Activated CD8-positive, alpha-beta T cell treated with anti-CD3 and anti-CD28 coated beads for 36 hours (primary cell): ENCODE measurements at regions of chr1 and their contacts with region 1.

Region 1: GRCh38 chr1:21270086-21270689 is 20.1 kb downstream of the ECE1 start:
- DNase-seq: peak; percentile 90
- ATAC-seq: peak; percentile 95
- H3K4me3 Mint-ChIP-seq: no peak overlapping the region
- H3K27ac Mint-ChIP-seq: peak overlapping the region; percentile 63
- H3K4me1 Mint-ChIP-seq: peaks cover 30% of the 10 kb centered on the region
- H3K27me3 Mint-ChIP-seq: no peaks in the 10 kb centered on the region
- CTCF ChIP-seq: peak; percentile 98

Region 2: DNA sequence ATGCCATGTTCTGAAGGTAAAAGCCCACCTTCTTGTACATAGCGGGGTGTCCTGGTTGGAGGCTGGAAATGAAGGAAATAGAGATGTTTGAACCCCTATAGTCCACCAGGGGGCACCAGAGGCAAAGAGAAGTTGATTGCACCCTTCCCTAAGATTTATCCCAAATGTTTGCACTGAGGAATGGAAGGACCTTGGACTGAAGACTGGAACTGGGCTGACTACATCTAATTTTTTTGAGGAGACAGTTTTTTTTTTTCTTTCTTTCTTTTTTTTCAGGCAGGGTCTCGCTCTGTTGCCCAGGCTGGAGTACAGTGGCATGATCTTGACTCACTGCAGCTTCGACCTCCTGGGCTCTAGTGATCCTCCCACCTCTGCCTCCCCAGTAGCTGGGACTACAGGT is 38.1 kb before region 1 on chr1:
- CTCF ChIA-PET with region 1: interaction called, 24 read pairs
- POLR2A ChIA-PET with region 1: no interaction called
- intact Hi-C with region 1: no loop called
- DNase-seq: peak; percentile 38
- ATAC-seq: peak; percentile 64
- H3K4me3 Mint-ChIP-seq: no peak overlapping the region
- H3K27ac Mint-ChIP-seq: no peak overlapping the region
- H3K4me1 Mint-ChIP-seq: no peaks in the 10 kb centered on the region
- H3K27me3 Mint-ChIP-seq: no peaks in the 10 kb centered on the region
- CTCF ChIP-seq: peak; percentile 99

Region 3: GRCh38 chr1:21255278-21255942 is 14.8 kb before region 1 on chr1:
- CTCF ChIA-PET with region 1: interaction called, 177 read pairs
- POLR2A ChIA-PET with region 1: interaction called, 6 read pairs
- intact Hi-C with region 1: no loop called
- DNase-seq: peak; percentile 92
- ATAC-seq: peak; percentile 45
- H3K4me3 Mint-ChIP-seq: no peak overlapping the region
- H3K27ac Mint-ChIP-seq: peak overlapping the region; percentile 87
- H3K4me1 Mint-ChIP-seq: peaks cover 58% of the 10 kb centered on the region
- H3K27me3 Mint-ChIP-seq: no peaks in the 10 kb centered on the region
- CTCF ChIP-seq: peak; percentile 85

Region 4: DNA sequence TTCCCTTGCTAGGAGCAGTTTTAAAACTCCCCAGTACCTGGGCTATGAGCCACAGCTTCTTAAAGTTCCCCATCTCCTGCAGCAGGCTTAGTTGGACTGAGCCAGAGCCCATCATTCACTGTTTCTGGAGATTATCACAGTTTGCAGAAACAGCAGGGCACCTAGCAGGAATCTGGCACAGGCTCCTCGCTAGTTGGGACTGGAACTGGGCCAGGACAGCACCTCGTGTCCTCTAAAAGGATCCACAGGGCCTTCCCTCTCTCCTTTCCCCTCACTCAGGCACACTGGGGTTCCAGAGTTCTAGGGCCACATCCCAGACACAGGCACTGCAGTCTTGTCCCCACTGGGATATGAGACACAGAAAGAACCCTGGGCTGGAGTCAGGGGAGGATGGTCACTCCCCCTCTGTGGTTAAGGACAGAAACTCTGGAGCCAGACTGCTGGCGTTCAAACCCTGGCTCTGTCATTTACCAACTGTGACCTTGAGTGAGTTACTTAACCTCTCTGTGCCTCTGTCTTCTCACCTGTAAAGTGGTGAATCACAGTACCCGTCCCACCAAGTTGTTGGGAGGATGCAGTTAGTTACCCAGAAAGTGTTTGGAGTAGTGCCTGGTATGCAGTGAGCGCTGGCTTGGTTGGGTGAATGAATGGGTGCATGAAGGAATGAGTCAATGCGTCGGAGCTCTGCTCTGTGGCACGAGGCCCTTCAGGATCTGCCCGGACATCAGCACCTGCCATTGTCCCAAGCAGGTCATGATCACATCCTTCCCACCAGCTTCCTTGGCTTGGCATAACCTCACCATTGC is 38.9 kb after region 1 on chr1:
- CTCF ChIA-PET with region 1: interaction called, 12 read pairs
- POLR2A ChIA-PET with region 1: no interaction called
- intact Hi-C with region 1: no loop called
- DNase-seq: no peak
- ATAC-seq: no peak
- H3K4me3 Mint-ChIP-seq: no peak overlapping the region
- H3K27ac Mint-ChIP-seq: peak overlapping the region; percentile 32
- H3K4me1 Mint-ChIP-seq: peaks cover 72% of the 10 kb centered on the region
- H3K27me3 Mint-ChIP-seq: no peaks in the 10 kb centered on the region
- CTCF ChIP-seq: no peak

Region 5: GRCh38 chr1:21334214-21335087 is 64.3 kb after region 1 on chr1:
- CTCF ChIA-PET with region 1: interaction called, 18 read pairs
- POLR2A ChIA-PET with region 1: interaction called, 3 read pairs
- intact Hi-C with region 1: no loop called
- DNase-seq: peak; percentile 90
- ATAC-seq: peak; percentile 90
- H3K4me3 Mint-ChIP-seq: peak overlapping the region; percentile 76
- H3K27ac Mint-ChIP-seq: peak overlapping the region; percentile 96
- H3K4me1 Mint-ChIP-seq: peaks cover 87% of the 10 kb centered on the region
- H3K27me3 Mint-ChIP-seq: no peaks in the 10 kb centered on the region
- CTCF ChIP-seq: peak; percentile 83

Region 6: DNA sequence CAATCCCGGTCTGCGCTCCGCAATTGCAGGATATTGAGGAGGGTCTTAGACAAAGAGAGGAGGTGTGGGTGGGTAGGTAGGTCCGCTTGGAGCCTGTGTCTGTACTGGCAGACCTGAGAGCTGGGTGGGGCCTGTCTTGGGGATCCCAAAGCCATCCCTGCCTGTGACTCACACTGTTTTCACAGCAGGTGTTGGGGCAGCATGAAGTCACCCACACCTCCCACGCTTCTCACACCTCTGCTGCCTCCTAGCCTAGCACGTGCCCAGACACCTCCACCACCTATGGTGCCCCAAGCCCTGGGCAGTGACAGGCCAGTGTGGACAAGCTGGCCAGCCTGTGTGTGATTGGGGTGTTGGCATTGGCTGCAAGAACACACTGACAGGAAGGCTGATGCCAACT is 85.8 kb after region 1 on chr1:
- CTCF ChIA-PET with region 1: interaction called, 27 read pairs
- POLR2A ChIA-PET with region 1: no interaction called
- intact Hi-C with region 1: no loop called
- DNase-seq: peak; percentile 56
- ATAC-seq: peak; percentile 91
- H3K4me3 Mint-ChIP-seq: no peak overlapping the region
- H3K27ac Mint-ChIP-seq: no peak overlapping the region
- H3K4me1 Mint-ChIP-seq: peaks cover 9% of the 10 kb centered on the region
- H3K27me3 Mint-ChIP-seq: no peaks in the 10 kb centered on the region
- CTCF ChIP-seq: no peak

Region 7: DNA sequence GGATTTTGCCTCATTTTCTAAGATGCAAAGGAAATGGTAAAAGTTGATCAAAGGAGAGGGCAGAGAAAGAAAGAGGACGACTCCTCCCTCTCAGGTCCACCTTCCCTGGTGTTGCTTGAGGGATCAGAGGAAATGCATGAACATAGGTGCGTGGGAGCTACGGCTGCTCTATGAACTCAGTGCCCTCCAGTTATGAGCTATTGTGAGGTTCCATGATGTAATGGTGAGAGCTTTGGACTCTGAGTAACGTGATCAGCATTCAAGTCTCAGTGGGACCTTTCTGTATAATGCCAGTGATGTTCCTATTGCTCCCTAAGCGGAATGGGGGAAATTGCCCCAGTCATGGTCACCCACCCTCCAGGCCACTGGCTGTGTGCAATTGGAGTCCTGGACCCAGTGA is 143.8 kb after region 1 on chr1:
- CTCF ChIA-PET with region 1: no interaction called
- POLR2A ChIA-PET with region 1: no interaction called
- intact Hi-C with region 1: no loop called
- DNase-seq: no peak
- ATAC-seq: no peak
- H3K4me3 Mint-ChIP-seq: no peak overlapping the region
- H3K27ac Mint-ChIP-seq: no peak overlapping the region
- H3K4me1 Mint-ChIP-seq: no peaks in the 10 kb centered on the region
- H3K27me3 Mint-ChIP-seq: peaks cover 12% of the 10 kb centered on the region
- CTCF ChIP-seq: no peak